Activated naive CD4-positive, alpha-beta T cell treated with anti-CD3 and anti-CD28 coated beads for 36 hours (primary cell): ENCODE measurements at regions of chr13 and their contacts with region 1.

Region 1: DNA sequence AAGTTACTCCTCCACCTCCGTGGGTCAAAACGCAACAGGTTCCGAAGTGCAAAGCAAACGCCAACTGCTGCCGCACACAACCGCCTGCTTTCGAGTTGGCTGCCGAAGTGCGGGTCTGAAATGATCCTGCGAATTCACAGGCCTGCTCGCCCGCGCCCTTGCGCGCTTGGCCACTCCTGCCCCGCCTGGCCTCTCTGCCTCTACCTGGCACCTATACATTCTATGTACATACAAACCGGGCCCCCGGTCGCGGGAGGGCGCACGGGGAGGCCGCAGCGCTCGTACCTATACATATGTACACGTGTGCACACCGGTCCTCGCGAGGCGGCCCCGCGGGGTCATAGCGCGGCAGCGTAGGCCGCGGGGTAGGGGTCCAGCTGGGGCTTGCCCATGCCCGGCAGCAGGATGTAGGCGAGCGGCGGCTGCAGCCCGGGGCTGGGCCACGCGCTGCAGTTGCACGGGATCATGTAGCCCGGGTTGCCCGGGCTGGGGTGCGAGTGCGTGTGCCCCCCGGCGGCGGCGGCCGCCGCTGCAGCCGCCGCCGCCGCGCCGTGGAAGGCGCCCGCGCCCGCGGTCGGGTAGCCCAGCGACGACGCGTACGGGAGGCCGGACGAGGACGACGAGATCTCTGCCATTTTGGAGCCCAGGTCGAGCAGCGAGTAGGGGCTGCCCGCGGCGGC is 1.3 kb downstream of the SOX21 start:
- DNase-seq: peak; percentile 22
- H3K4me3 Mint-ChIP-seq: peak overlapping the region; percentile 48
- H3K27ac Mint-ChIP-seq: no peak overlapping the region
- H3K4me1 Mint-ChIP-seq: peaks cover 24% of the 10 kb centered on the region
- H3K27me3 Mint-ChIP-seq: peaks cover 72% of the 10 kb centered on the region

Region 2: GRCh38 chr13:94435604-94436226 is 275.3 kb before region 1 on chr13:
- CTCF ChIA-PET with region 1: no interaction called
- intact Hi-C with region 1: loop called (anchors 2 kb)
- DNase-seq: no peak
- H3K4me3 Mint-ChIP-seq: no peak overlapping the region
- H3K27ac Mint-ChIP-seq: no peak overlapping the region
- H3K4me1 Mint-ChIP-seq: peaks cover 28% of the 10 kb centered on the region
- H3K27me3 Mint-ChIP-seq: no peaks in the 10 kb centered on the region

Region 3: DNA sequence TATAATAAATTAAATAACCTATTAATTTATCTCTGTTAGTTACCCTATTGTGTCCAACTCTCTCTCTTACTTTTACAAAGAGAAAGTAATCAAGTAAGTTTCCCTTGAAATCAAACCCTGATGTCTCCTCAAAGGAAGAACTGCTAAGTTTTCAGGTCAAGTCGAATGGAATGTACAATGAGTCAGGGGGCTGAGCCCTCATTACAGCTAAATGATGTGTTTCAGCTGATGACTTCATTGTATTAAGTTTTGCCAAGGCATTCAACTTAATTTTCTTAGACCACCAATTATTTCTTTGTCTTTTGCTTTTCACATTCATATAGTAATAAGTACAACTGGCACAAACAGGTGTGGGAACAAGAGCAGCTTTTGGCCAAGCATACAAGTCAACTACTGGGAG is 176.9 kb before region 1 on chr13:
- CTCF ChIA-PET with region 1: no interaction called
- intact Hi-C with region 1: no loop called
- DNase-seq: no peak
- H3K4me3 Mint-ChIP-seq: no peak overlapping the region
- H3K27ac Mint-ChIP-seq: no peak overlapping the region
- H3K4me1 Mint-ChIP-seq: peaks cover 11% of the 10 kb centered on the region
- H3K27me3 Mint-ChIP-seq: no peaks in the 10 kb centered on the region

Region 4: GRCh38 chr13:94660695-94661326 is 50.2 kb before region 1 on chr13:
- CTCF ChIA-PET with region 1: no interaction called
- intact Hi-C with region 1: loop called (anchors 1 kb)
- DNase-seq: peak; percentile 58
- H3K4me3 Mint-ChIP-seq: no peak overlapping the region
- H3K27ac Mint-ChIP-seq: no peak overlapping the region
- H3K4me1 Mint-ChIP-seq: peaks cover 37% of the 10 kb centered on the region
- H3K27me3 Mint-ChIP-seq: peaks cover 16% of the 10 kb centered on the region

Region 5: GRCh38 chr13:94967183-94968039 is 256.4 kb after region 1 on chr13:
- CTCF ChIA-PET with region 1: no interaction called
- intact Hi-C with region 1: loop called (anchors 5 kb)
- DNase-seq: peak; percentile 37
- H3K4me3 Mint-ChIP-seq: no peak overlapping the region
- H3K27ac Mint-ChIP-seq: no peak overlapping the region
- H3K4me1 Mint-ChIP-seq: peaks cover 10% of the 10 kb centered on the region
- H3K27me3 Mint-ChIP-seq: peaks cover 62% of the 10 kb centered on the region

Region 6: GRCh38 chr13:95378603-95379002 is 667.6 kb after region 1 on chr13:
- CTCF ChIA-PET with region 1: no interaction called
- intact Hi-C with region 1: loop called (anchors 1 kb)
- DNase-seq: no peak
- H3K4me3 Mint-ChIP-seq: no peak overlapping the region
- H3K27ac Mint-ChIP-seq: no peak overlapping the region
- H3K4me1 Mint-ChIP-seq: peaks cover 5% of the 10 kb centered on the region
- H3K27me3 Mint-ChIP-seq: no peaks in the 10 kb centered on the region